ENCODE measurements at regions of chr11 and their contacts with region 1.

Region 1: GRCh38 chr11:5891216-5891800 is 1.7 kb upstream of the OR52E5 start:
- DNase-seq: no peak
- ATAC-seq: no peak
- H3K4me3 Mint-ChIP-seq: no peak overlapping the region
- H3K27ac Mint-ChIP-seq: no peak overlapping the region
- H3K4me1 Mint-ChIP-seq: no peaks in the 10 kb centered on the region
- H3K27me3 Mint-ChIP-seq: no peaks in the 10 kb centered on the region
- CTCF ChIP-seq: no peak

Region 2: DNA sequence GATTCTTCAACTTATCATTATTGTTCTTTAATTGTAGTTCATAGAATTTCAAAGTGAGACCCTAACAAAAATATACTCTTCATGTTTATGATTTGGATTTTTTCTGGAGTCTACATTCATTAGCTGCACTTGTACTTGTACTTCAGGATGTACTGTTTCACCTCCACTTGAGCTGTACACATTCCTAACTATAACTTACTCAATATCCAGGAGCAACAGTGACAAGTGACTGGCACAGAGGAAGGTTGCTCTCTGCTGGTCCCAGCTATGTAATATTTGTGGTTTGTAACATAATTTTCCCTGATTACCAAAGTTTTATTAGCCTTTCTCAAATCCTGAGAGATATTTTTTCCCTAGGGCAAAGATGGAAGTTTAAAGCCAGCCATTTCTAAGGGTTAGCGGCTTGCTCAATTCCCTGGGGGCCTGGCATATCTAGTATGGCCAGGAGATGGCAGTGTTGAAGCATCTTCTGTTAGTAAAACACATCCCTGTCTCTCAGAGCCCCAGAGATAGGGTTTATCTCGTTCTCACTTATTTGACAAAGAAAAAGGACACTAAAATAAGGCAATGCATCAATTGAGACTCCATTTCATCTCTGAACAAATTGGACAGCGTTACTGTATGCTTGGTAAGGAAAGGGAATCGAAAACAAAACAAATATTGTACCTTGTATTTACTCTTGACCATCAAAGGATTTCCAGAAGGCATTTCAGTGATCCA is 767.3 kb before region 1 on chr11:
- CTCF ChIA-PET with region 1: interaction called, 8 read pairs
- POLR2A ChIA-PET with region 1: no interaction called
- intact Hi-C with region 1: loop called (anchors 1 kb)
- DNase-seq: no peak
- ATAC-seq: peak; percentile 45
- H3K4me3 Mint-ChIP-seq: no peak overlapping the region
- H3K27ac Mint-ChIP-seq: no peak overlapping the region
- H3K4me1 Mint-ChIP-seq: no peaks in the 10 kb centered on the region
- H3K27me3 Mint-ChIP-seq: peaks cover 4% of the 10 kb centered on the region
- CTCF ChIP-seq: no peak

Region 3: GRCh38 chr11:5204787-5205186 is 686.5 kb before region 1 on chr11:
- CTCF ChIA-PET with region 1: interaction called, 3 read pairs
- POLR2A ChIA-PET with region 1: no interaction called
- intact Hi-C with region 1: loop called (anchors 10 kb)
- DNase-seq: no peak
- ATAC-seq: no peak
- H3K4me3 Mint-ChIP-seq: no peak overlapping the region
- H3K27ac Mint-ChIP-seq: no peak overlapping the region
- H3K4me1 Mint-ChIP-seq: no peaks in the 10 kb centered on the region
- H3K27me3 Mint-ChIP-seq: no peaks in the 10 kb centered on the region
- CTCF ChIP-seq: no peak

Region 4: DNA sequence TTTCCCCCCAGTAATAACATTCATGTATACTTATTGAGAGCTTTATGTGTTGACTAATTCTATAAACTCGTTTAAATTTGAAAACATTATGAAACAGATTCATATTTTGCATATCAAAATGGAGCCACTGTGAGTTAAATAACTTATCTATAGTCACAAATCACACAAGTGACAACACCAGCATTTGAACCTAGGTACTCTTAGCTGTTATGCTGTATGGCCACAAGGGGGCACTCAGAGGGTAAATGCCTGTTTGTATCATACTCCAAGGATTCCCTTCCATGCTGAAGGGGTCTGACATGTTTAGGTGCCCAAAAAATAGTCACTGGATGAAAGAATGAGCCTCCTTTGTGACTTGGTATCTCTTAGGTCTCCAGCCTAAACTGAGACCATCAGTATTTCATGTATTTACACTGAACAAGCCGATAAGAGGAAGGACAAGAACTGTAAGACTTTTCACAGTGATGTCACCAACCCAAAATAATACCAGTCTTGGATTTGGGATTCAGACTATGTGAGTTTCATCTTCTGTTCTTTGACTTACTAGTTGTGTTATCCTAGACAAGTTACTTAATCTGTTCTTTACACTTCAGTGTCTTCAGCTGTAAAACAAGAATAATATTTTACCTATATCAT is 415.0 kb before region 1 on chr11:
- CTCF ChIA-PET with region 1: interaction called, 8 read pairs
- POLR2A ChIA-PET with region 1: no interaction called
- intact Hi-C with region 1: loop called (anchors 1 kb)
- DNase-seq: no peak
- ATAC-seq: peak; percentile 52
- H3K4me3 Mint-ChIP-seq: no peak overlapping the region
- H3K27ac Mint-ChIP-seq: no peak overlapping the region
- H3K4me1 Mint-ChIP-seq: no peaks in the 10 kb centered on the region
- H3K27me3 Mint-ChIP-seq: peaks cover 13% of the 10 kb centered on the region
- CTCF ChIP-seq: no peak

Region 5: DNA sequence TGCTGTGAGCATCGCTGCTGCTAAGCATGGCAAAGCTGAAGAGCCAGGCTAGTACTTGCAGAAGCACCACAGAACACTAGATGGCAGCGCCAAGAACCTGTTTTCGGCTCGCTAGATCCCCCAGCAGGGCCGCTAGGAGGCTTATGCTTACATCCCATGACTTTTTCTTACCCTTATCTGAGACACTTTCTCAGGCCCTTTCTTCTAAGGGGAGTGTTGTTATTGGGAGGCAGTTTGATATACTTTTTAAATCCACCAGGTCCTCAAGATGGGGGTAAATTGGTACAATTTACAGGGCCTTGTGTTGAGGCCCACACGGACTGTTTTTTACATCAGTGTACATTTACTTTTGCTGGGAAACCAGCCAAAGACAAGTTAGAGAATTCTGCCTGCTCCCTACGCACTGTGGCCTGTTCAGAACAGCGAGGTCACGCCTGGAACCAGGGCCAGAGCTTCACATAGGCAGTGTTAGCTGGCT is 290.9 kb before region 1 on chr11:
- CTCF ChIA-PET with region 1: interaction called, 9 read pairs
- POLR2A ChIA-PET with region 1: no interaction called
- intact Hi-C with region 1: loop called (anchors 1 kb)
- DNase-seq: peak; percentile 25
- ATAC-seq: peak; percentile 95
- H3K4me3 Mint-ChIP-seq: no peak overlapping the region
- H3K27ac Mint-ChIP-seq: no peak overlapping the region
- H3K4me1 Mint-ChIP-seq: peaks cover 17% of the 10 kb centered on the region
- H3K27me3 Mint-ChIP-seq: peaks cover 3% of the 10 kb centered on the region
- CTCF ChIP-seq: no peak

Region 6: DNA sequence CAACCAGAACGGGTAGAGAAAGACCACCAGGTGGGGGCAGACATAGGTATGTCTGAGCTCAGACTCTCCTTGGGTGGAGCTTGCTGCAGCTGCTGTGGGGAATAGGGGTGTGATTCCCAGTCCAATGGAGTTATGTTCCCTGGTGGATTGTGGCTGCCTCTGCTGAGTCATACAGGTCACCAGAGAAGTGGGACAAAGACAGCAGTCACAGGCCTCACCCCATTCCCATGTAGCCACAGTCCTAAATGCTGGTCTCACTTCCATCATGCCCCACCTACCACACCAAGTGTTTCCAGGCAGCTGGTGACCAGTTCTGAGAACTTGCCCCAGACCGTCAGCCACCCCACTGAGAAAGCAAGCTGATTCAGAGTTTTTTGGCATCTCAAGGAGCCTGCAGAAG is 19.2 kb after region 1 on chr11:
- CTCF ChIA-PET with region 1: no interaction called
- POLR2A ChIA-PET with region 1: no interaction called
- intact Hi-C with region 1: no loop called
- DNase-seq: no peak
- ATAC-seq: no peak
- H3K4me3 Mint-ChIP-seq: no peak overlapping the region
- H3K27ac Mint-ChIP-seq: no peak overlapping the region
- H3K4me1 Mint-ChIP-seq: no peaks in the 10 kb centered on the region
- H3K27me3 Mint-ChIP-seq: peaks cover 10% of the 10 kb centered on the region
- CTCF ChIP-seq: no peak

Measured in activated B cell treated with CpG ODN at 0.5 μM for 24 hours (primary cell).